Lower leg skin (tissue), 4 donors: ENCODE measurements at regions of chr2 and their contacts with region 1.

Region 1: DNA sequence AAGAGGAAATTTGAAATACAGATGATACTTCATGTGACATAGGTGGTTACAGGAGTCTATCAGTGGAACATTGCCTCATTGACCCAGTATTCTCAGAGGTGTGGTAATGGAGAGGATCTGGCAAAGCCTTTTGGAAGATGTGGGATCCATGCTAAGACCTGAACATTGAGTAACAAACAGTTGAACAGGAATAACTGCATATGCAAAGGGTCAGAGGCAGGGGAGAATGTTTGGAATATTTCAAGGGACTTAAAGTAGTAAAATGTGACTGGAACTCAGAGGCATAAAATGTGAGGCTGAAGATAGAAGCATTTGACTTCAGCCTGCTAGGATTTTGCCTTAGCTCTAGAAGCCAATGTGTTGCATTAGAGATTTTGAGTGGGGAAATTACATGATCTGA is 300.2 kb upstream of the ETAA1 start:
- DNase-seq: no peak
- H3K4me3 ChIP-seq: no peak overlapping the region
- CTCF ChIP-seq: no peak
- POLR2A ChIP-seq: no peak

Region 2: DNA sequence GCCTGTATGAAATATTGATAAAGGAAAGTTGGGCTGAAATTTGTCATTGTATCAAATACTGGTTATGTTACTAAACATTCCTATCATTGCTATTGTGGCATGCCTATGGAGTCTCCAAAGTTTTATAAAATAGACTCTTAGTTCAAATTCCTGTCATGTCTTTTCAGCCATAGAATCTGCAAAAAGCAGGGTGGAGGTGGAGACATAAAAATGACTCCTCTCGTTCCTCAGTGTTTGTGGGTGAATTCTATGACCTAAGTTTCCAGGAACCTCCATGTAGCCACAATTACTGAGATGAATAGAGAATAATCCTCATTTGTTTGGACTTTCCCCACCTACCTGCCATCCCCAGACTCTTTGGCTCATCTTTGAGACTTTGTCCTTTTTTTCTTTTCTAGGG is 26.1 kb before region 1 on chr2:
- intact Hi-C with region 1: loop called (anchors 1 kb)
- DNase-seq: no peak
- H3K4me3 ChIP-seq: no peak overlapping the region
- CTCF ChIP-seq: no peak
- POLR2A ChIP-seq: no peak

Region 3: DNA sequence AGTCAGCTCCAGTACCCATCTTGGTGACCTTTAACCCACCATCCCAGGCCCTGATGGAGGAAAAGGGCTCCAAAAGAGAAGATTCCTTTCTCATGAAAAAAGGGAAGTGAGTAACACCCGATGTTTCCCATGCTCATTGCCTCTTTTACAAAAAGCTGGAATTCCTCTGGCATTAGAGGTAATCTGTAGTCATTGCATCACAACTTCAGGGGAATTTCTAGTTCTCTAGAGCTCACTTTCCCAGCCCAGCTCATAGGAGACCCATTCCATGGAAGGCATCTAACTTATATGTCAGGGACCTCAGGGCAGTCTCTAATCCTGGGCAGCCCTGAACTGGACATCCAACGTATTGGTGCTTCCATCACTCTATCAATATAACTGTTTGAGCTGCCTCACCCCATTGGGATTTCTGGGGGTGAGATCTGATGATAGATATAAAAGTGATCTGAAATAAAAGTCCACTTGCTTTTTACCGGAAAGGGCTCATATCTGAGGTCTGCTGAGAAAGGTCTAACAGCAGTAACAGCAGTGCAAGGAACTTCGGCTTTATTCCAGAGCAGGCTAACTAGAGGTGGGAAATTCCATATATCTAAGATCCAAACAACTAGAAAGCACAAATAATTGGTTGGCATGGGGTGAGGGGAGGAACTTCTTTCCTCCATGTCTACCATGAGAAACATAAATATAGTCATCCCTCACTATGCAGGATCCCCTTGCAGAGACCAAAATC is 406.3 kb after region 1 on chr2:
- intact Hi-C with region 1: no loop called
- DNase-seq: no peak
- H3K4me3 ChIP-seq: no peak overlapping the region
- CTCF ChIP-seq: no peak
- POLR2A ChIP-seq: no peak